ENCODE measurements at regions of chr1 and their contacts with region 1.

Region 1: DNA sequence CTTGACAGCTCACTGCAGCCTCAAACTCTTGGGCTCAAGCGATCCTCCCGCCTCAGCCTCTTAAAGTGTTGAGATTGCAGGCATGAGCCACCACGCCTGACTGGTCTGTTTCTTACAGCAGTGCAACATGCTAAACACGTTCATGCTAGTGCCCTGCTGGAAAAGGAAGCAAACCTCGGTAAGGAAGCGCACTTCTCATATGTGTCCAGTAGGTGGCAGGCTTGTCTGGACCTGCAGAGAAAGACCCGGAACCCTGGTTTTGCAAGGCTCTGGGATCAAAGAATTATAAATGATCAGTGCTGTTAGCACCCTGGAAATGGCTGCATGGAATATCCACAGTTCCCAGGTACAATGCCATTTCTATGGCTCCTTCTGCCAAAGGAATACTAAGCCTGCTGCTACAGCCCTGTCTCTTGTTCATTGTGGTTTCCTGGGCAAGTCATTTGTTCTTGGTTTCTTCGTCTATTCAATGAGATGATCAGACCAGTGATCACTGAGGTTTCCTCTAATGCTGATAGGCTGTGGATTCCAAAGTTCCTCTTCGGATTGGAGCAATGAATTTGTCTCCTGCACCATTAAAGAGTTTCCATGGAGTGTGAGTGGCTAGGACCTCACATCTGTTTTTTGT is 15.9 kb downstream of the RNU5D-1 start:
- DNase-seq: peak; percentile 77
- CTCF ChIP-seq: peak; percentile 87

Region 2: DNA sequence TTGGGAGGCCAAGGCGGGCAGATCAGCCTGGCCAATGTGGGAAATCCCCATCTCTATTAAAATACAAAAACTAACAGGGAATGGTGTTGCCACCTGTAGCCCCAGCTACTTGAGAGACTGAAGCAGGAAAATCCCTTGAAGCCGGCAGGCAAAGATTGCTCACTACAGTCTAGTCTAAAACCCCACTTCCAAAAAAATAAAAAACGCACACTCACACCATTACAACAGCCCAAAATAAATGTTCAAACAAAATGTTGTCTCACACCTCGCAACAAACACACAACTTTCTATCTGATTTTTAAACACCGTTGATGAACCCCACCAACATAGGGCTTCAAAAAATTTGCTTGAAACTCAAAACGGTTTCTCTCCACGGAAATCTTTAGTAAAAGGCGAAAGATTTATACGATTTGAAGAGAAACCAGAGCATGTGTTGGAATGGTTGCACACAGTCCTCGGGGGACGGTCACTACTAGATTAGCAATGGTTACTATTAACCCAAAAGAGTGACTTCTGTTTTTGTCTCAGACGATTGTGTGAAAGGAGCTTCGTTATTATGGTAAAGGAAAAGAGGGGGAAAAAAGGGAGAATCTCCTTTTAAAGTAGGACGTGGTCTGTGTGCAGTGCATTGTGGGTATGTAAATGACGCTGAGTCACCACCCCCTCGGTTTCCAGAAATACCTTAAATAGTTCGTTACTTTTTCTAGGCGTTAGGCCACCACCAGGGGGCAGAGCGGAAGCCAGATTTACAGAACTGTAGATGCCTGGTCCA is 15.9 kb after region 1 on chr1 and contains the start of gene RNU5D-1:
- CTCF ChIA-PET with region 1: interaction called, 42 read pairs
- POLR2A ChIA-PET with region 1: interaction called, 95 read pairs
- DNase-seq: peak; percentile 87
- CTCF ChIP-seq: peak; percentile 81

Measured in GM10248 (cell line).